AG04450 (cell line): ENCODE measurements at regions of chr6 and their contacts with region 1.

Region 1: GRCh38 chr6:106979427-106979884 is 4.9 kb upstream of the CD24 start:
- DNase-seq: peak; percentile 55
- H3K4me3 ChIP-seq: peak overlapping the region; percentile 1; the same call in 1 of the 2 replicates
- H3K27ac ChIP-seq: no peak overlapping the region
- H3K27me3 ChIP-seq: peaks cover 25% of the 10 kb centered on the region
- CTCF ChIP-seq: peak; percentile 98

Region 2: DNA sequence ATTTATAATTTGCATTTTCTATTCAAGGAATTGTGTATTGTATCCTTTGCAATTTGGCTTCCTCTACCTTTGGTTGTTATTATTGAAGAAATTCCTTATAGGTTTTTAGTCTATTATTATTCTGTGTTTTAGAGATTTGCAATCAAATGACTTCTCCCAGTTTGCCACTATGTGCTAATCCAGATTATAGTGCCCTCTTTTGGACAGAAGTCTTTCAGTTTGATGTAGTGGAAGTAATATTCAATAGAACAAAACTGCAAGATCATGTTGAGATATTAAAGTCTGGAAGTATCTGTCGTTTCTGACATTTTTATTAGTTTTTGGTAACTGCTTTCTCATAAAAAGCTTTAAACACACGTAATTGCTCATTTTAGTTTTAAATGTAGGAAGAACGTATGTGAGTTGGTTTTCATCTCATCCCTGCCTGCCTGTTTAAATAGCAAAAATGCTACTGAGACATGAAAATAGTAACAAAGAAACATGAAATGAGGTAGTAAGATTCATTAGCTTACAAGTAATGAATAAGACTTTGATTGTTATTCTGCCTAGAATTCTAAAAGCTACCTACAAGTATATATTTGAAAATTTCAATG is 423.0 kb before region 1 on chr6:
- CTCF ChIA-PET with region 1: interaction called, 10 read pairs
- POLR2A ChIA-PET with region 1: no interaction called
- DNase-seq: no peak
- H3K4me3 ChIP-seq: no peak overlapping the region
- H3K27ac ChIP-seq: no peak overlapping the region
- H3K27me3 ChIP-seq: no peaks in the 10 kb centered on the region
- CTCF ChIP-seq: peak; percentile 52

Region 3: GRCh38 chr6:106568530-106568929 is 410.9 kb before region 1 on chr6:
- CTCF ChIA-PET with region 1: interaction called, 22 read pairs
- POLR2A ChIA-PET with region 1: no interaction called
- DNase-seq: no peak
- H3K4me3 ChIP-seq: no peak overlapping the region
- H3K27ac ChIP-seq: no peak overlapping the region
- H3K27me3 ChIP-seq: no peaks in the 10 kb centered on the region
- CTCF ChIP-seq: no peak

Region 4: GRCh38 chr6:107026965-107027364 is 47.5 kb after region 1 on chr6:
- CTCF ChIA-PET with region 1: interaction called, 10 read pairs
- POLR2A ChIA-PET with region 1: no interaction called
- DNase-seq: no peak
- H3K4me3 ChIP-seq: no peak overlapping the region
- H3K27ac ChIP-seq: no peak overlapping the region
- H3K27me3 ChIP-seq: no peaks in the 10 kb centered on the region
- CTCF ChIP-seq: no peak